Left ventricle myocardium inferior (tissue), 1 donor: ENCODE measurements at regions of chr3 and their contacts with region 1.

Region 1: DNA sequence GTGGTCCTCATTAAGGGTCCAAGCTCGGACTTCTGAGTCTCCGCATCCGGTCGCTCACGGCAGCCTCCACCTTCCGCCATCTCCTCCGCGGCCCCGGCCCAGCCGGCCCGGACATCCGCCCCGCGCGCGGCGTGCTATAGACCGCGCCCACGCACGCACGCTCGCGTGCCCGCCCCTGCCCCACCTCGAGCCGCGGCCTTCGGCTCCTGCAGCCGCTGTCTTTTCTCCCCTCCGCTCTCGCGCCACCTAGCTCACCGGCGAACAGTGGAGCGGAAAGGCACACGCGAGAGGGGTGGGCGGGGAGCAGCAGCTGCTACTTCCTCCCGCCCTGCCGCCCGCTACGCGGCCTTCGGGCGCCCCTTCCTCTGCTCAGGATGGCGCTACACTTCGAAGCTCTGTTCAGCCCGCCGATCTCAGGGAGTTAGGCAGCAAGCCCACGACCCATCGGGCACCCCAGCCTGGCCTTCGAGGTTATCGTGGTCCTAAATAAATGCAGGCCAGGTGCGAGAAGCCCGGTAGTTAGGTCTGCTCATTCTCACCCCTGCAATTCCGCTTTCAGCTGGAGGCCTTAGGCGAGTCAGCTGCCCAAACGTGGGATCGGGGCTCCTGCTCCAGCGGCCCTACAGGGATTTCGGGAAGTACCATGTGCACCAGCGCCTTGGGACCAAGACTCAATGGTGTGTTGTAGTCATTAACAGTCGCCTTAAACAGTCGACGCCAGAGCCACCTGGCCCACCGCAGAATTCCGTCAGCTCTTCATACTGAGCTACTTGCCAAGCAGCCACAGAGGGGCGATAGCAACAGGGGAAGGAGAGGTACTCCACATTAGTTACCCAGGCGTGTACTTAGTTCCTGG is at the start of gene USP4:
- DNase-seq: peak; percentile 93
- H3K4me3 ChIP-seq: peak within 1 kb of the TSS; percentile 82
- H3K27ac ChIP-seq: peak within 1 kb of the TSS; percentile 94
- H3K4me1 ChIP-seq: peaks cover 43% of the 10 kb centered on the region
- H3K27me3 ChIP-seq: no peaks in the 10 kb centered on the region
- CTCF ChIP-seq: peak; percentile 55
- total RNA-seq, gene USP4: 37.3 TPM

Region 2: DNA sequence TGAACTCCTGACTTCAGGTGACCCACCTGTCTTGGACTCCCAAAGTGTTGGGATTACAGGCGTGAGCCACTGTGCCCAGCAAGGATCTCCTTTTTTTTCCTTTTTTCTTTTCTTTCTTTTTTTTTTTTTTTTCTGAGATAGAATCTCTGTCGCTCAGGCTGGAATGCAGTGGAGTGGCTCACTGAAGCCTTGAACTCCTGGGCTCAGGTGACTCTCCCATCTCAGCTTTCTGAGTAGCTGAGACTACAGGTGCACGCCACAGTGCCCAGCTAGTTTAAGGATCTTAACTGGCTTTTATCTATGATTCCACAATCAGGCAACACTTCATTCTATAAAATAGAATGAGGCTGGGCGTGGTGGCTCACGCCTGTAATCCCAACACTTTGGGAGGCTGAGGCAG is 105.2 kb after region 1 on chr3:
- intact Hi-C with region 1: loop called (anchors 10 kb)
- DNase-seq: no peak
- H3K4me3 ChIP-seq: no peak overlapping the region
- H3K27ac ChIP-seq: no peak overlapping the region
- H3K4me1 ChIP-seq: peaks cover 18% of the 10 kb centered on the region
- H3K27me3 ChIP-seq: no peaks in the 10 kb centered on the region
- CTCF ChIP-seq: no peak

Region 3: DNA sequence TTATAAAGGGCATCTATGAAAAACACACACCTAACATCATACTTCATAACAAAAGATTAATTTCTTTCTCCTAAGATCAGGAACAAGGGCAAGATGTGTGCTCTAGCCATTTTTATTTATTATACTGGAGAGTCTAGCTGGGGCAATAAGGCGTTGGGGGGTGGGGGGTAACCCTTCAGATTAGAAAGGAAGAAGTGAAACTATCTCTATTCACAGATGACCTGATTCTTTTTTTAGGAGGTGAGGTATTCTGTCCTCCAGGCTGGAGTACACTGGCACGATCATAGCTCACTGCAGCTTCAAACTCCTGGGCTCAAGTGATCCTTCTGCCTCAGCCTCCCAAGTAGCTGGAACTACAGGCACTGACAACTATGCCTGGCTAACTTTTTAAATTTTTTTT is 1955.5 kb after region 1 on chr3:
- intact Hi-C with region 1: no loop called
- DNase-seq: no peak
- H3K4me3 ChIP-seq: no peak overlapping the region
- H3K27ac ChIP-seq: no peak overlapping the region
- H3K4me1 ChIP-seq: no peaks in the 10 kb centered on the region
- H3K27me3 ChIP-seq: no peaks in the 10 kb centered on the region
- CTCF ChIP-seq: no peak